ENCODE measurements at regions of chr19 and their contacts with region 1.

Region 1: DNA sequence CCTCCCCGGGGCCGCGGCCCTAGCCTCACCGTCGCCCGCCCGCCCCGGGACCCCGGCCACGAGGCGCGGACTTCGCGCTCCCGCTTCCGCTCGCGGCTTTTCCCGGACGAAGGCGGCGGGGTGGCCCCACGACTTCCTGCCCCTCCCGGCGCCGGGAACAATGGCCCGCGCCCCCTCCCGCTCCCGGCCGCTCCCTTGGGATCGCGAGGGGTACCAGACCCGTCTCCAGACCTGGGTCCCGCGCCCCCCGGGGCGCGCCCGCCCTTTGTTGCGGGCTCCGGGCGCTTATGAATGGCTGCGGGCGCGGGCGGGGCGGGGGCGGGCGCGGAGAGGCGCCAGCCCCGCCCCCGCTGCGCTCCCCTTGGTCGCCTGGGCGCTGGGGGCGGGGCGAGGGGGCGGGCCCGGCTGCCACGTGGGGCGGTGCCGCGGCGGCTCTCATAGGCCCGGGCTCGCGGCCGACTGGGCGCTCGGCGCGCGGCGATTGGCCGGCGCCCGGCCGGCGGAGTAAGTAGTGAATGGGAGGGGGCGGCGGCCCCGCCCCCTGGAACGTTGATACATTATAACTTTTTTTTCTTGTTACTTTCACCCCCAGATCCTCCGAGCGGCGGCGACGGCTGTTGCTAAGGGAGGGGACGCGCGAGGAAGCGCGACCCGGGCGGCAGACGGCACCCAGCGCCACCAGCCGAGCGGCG is 1.1 kb downstream of the MIDN start:
- DNase-seq: peak; percentile 97
- H3K4me3 Mint-ChIP-seq: peak overlapping the region; percentile 71
- H3K27ac Mint-ChIP-seq: peak overlapping the region; percentile 82
- H3K4me1 Mint-ChIP-seq: peaks cover 12% of the 10 kb centered on the region
- H3K27me3 Mint-ChIP-seq: no peaks in the 10 kb centered on the region

Region 2: DNA sequence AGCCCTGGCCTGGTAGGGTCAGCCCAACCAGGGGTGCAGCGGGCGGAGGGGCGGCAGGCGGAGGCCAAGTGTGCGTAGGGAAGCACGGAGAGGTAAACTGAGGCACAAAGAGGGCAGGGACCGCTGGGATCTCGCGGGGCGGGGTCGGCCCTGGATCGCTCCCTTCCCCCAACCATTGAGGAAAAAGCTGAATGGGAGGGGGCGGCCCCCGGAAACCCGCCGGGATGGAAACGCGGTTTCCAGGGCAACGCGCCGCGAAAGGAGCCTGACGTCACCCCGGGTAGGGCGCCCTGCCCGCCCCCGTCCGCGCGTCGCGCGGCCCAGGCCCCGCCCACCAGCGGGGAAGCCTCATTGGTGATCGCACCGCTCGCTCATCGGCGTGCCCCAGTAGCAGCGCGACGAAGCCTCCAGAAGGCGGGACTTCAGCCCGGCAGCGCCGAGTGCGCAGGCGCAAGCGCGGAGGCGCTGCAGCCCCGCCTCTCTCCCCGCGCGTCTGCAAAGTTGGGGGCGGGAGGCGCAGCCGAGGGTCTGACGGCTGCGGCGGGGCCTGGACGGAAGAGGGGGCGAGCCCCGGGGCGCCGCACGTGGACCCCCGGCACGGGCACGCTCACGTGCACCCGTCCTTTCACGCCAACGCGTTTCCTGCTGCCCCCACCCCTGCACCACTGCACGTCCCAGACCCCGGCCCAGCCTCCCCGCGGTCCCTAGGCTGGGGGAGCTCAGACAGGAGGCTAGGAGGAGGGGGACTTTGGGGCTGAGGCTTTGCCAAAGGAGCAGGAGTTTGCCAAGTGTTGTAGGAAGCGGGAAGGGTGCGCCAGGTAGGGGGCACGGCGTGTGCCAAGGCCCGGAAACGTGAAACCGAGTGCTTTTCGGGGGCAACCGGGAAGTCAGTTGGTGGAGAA is 11.4 kb after region 1 on chr19:
- CTCF ChIA-PET with region 1: interaction called, 649 read pairs
- POLR2A ChIA-PET with region 1: interaction called, 37 read pairs
- intact Hi-C with region 1: loop called (anchors 1 kb)
- DNase-seq: peak; percentile 98
- H3K4me3 Mint-ChIP-seq: peak overlapping the region; percentile 94
- H3K27ac Mint-ChIP-seq: peak overlapping the region; percentile 96
- H3K4me1 Mint-ChIP-seq: peaks cover 52% of the 10 kb centered on the region
- H3K27me3 Mint-ChIP-seq: no peaks in the 10 kb centered on the region

Region 3: DNA sequence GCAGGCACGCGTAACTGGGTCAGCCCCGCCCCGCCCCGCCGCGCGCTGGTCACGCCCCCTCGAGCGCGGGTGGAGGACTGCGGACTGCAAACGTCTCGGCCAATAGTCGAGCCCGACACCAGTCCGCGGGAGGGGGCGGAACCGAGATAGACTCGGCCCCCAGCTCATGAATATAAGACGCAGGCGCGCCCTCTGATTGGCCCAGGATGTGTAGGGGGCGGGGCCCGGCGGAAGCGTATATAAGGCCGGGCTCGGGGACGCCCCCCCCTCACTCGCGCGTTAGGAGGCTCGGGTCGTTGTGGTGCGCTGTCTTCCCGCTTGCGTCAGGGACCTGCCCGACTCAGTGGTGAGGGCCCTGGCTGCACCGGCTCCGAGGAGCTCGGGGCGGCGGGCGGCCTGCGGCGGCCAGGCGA is 19.6 kb after region 1 on chr19 and contains the start of gene CIRBP:
- CTCF ChIA-PET with region 1: interaction called, 649 read pairs
- POLR2A ChIA-PET with region 1: interaction called, 37 read pairs
- intact Hi-C with region 1: loop called (anchors 1 kb)
- DNase-seq: peak; percentile 100
- H3K4me3 Mint-ChIP-seq: peak within 1 kb of the TSS; percentile 90
- H3K27ac Mint-ChIP-seq: peak within 1 kb of the TSS; percentile 89
- H3K4me1 Mint-ChIP-seq: peaks cover 64% of the 10 kb centered on the region
- H3K27me3 Mint-ChIP-seq: no peaks in the 10 kb centered on the region
- total RNA-seq, gene CIRBP: 171 to 173 TPM

Measured in activated CD4-positive, alpha-beta memory T cell treated with anti-CD3 and anti-CD28 coated beads for 36 hours (primary cell).